Posterior vena cava (tissue), 2 donors: ENCODE measurements at regions of chr6 and their contacts with region 1.

Region 1: DNA sequence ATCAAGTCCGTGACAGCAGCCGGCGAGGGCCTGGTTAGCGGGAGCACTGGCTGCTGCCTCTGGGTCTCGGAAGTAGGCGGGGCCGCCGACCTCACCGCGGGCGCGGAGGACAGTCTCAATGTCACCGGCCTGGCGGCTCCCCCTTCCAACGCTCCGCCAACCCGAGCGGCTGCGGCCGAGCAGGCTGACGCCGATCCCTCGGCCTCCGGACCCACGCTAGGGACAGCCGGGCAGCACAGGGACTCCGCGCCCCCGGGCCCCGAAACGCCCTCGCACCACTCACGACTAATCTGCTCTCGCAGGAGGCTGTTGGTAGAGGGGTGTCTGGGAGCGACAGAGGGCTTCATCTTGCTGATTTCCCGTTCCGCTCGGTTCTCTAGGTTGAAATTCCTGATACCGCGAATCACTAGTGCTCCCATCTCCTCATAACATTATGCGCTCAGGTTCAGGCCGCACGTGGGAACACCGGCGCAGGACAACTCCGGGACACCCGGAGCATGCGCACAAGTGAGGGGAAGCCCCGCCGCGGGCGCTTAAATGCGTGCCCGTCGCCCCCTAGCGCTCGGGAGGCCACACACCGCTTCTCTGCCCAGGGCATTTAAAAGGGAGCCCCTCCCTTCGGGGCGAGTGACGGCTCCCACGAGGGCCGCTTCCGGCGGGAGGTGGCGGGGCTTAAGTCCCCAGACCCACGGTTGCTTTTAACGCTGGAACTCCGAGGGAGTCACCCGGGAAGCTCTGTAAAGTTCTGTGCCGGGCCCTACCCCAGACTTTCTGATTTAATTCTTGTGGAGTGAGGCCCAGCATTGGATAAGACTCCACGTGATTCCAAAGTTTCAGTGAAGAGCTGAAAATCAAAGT is at the start of gene NDUFAF4:
- DNase-seq: peak; percentile 99
- total RNA-seq, gene NDUFAF4: 32.2 to 34.9 TPM

Region 2: DNA sequence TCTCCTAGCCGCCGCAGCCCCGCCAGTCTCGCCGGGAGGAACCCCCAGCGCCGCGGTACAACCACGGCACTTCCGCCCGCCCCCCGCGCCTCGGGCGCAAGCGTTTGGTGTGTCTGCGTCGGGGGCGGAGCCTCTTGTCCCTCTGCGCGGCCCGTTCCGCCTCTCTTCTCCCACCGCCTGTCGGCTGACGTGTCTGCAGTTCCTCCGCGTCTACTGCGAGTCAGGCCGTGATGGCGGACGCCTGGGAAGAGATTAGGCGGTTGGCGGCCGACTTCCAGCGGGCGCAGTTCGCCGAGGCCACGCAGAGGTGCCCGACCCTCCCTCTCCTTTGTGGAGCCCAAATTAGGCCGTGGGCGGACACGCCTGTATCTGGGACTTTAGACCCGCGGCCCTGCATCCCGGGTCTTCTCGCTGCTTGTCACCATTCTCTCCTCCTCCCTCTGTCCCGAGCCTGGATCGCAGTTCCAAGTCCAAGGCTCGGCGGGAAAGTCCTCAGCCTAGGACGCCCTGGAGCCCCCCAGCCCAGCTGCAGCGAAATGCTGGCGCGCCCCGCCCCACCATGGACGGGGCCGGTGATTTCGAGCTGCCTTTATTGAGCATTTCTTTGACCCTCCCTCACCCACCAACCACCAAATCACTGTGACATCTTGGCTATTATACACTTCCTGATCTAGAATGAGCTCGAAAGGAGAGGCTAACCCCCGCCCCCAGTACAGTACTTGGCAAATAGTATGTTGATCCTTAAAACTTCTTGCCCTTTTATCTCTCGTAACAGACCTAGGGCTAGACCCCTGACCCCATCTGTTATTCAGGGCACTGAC is 375.8 kb before region 1 on chr6 and contains the start of gene UFL1:
- intact Hi-C with region 1: loop called in 1 of 2 experiments (anchors 10 kb)
- DNase-seq: peak; percentile 98
- total RNA-seq, gene UFL1: 28.1 to 28.9 TPM

Region 3: GRCh38 chr6:96704713-96705112 is 192.9 kb before region 1 on chr6:
- intact Hi-C with region 1: no loop called
- DNase-seq: no peak